Breast epithelium (tissue), 4 donors: ENCODE measurements at regions of chr11 and their contacts with region 1.

Region 1: GRCh38 chr11:119161871-119162623 is 6.5 kb upstream of the NLRX1 start:
- DNase-seq: no peak
- H3K4me3 ChIP-seq: no peak overlapping the region
- H3K27ac ChIP-seq: no peak overlapping the region
- H3K4me1 ChIP-seq: no peaks in the 10 kb centered on the region
- H3K27me3 ChIP-seq: no peaks in the 10 kb centered on the region
- CTCF ChIP-seq: no peak
- POLR2A ChIP-seq: no peak

Region 2: GRCh38 chr11:119185981-119186634 is 24.1 kb after region 1 on chr11:
- intact Hi-C with region 1: loop called (anchors 1 kb)
- DNase-seq: no peak
- H3K4me3 ChIP-seq: no peak overlapping the region
- H3K27ac ChIP-seq: no peak overlapping the region
- H3K4me1 ChIP-seq: no peaks in the 10 kb centered on the region
- H3K27me3 ChIP-seq: peaks cover 0 to 2% of the 10 kb centered on the region in 2 donors
- CTCF ChIP-seq: no peak
- POLR2A ChIP-seq: no peak